ENCODE measurements at regions of chr3 and their contacts with region 1.

Region 1: GRCh38 chr3:62622553-62623193 is 249.3 kb upstream of the FEZF2 start:
- DNase-seq: no peak
- H3K4me3 ChIP-seq: no peak overlapping the region
- H3K27ac ChIP-seq: no peak overlapping the region
- H3K4me1 ChIP-seq: no peaks in the 10 kb centered on the region
- H3K27me3 ChIP-seq: no peaks in the 10 kb centered on the region
- CTCF ChIP-seq: peak; percentile 71

Region 2: DNA sequence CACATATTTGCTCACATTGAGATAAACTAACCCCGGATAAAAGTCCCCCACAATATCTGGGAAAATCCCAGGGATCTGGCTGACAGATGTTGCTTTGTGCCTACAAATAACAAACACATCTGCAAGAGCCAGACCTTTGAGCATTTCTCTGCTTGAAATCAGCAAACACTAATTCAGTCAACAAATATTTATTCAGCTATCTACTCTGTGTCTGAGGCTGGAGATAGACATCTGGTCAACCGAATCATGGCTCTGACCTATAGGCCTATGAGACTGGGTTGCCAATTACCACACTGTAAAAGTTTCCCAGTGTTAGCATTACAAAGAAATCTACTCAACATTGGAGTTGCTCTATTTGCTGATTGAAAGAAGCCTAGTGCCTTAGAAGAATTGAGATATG is 453.7 kb after region 1 on chr3:
- intact Hi-C with region 1: no loop called
- DNase-seq: no peak
- H3K4me3 ChIP-seq: no peak overlapping the region
- H3K27ac ChIP-seq: no peak overlapping the region
- H3K4me1 ChIP-seq: no peaks in the 10 kb centered on the region
- H3K27me3 ChIP-seq: no peaks in the 10 kb centered on the region
- CTCF ChIP-seq: no peak

Region 3: GRCh38 chr3:63193629-63194028 is 571.0 kb after region 1 on chr3:
- intact Hi-C with region 1: loop called (anchors 10 kb)
- DNase-seq: no peak
- H3K4me3 ChIP-seq: no peak overlapping the region
- H3K27ac ChIP-seq: no peak overlapping the region
- H3K4me1 ChIP-seq: no peaks in the 10 kb centered on the region
- H3K27me3 ChIP-seq: no peaks in the 10 kb centered on the region
- CTCF ChIP-seq: peak; percentile 62

Region 4: DNA sequence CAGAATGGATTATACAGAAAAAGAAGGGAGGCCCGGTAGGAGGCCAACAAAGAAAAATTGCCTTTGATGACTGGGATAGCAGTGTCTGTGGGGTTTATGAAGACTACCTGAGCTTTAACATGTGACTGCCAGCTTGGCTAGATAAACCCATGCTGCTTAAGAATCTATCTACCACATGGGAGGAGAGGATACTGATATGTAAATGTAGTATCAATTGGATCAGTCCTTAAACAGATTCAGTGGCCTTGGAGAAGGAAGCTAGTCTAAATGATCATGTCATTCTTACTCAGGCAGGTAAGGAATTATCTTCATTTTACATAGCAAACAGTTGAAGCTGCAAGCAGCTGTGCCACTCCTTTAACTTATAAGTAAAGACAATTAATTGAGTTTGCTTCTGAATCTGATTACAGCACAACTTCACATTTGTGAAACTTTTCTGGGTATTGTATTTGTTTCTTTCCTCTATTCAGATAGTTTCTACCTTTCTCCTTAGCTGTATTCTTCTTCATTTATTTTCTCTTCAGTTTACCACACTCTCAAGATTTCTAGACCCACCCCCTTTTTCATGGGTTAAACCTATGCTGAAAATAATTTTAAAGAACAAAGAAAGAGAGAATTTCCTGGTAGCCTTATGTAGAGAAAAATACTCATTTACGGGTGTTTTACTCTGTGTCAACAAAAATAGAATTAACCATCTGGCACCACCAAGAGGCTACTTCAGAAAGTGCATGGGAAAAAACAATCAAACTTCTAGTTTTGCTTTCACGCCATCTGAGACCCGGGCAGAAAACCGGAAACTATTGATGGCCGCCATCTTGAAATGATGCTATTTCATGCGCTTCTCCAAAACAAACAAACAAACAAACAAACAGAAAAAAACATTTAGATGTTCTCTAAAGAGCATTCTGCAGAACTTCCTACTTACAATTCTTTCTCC is 605.7 kb after region 1 on chr3:
- intact Hi-C with region 1: loop called (anchors 5 kb)
- DNase-seq: no peak
- H3K4me3 ChIP-seq: no peak overlapping the region
- H3K27ac ChIP-seq: no peak overlapping the region
- H3K4me1 ChIP-seq: peaks cover 6% of the 10 kb centered on the region
- H3K27me3 ChIP-seq: no peaks in the 10 kb centered on the region
- CTCF ChIP-seq: peak; percentile 65

Measured in left ventricle myocardium inferior (tissue), 1 donor.